ENCODE measurements at regions of chr18 and their contacts with region 1.

Region 1: DNA sequence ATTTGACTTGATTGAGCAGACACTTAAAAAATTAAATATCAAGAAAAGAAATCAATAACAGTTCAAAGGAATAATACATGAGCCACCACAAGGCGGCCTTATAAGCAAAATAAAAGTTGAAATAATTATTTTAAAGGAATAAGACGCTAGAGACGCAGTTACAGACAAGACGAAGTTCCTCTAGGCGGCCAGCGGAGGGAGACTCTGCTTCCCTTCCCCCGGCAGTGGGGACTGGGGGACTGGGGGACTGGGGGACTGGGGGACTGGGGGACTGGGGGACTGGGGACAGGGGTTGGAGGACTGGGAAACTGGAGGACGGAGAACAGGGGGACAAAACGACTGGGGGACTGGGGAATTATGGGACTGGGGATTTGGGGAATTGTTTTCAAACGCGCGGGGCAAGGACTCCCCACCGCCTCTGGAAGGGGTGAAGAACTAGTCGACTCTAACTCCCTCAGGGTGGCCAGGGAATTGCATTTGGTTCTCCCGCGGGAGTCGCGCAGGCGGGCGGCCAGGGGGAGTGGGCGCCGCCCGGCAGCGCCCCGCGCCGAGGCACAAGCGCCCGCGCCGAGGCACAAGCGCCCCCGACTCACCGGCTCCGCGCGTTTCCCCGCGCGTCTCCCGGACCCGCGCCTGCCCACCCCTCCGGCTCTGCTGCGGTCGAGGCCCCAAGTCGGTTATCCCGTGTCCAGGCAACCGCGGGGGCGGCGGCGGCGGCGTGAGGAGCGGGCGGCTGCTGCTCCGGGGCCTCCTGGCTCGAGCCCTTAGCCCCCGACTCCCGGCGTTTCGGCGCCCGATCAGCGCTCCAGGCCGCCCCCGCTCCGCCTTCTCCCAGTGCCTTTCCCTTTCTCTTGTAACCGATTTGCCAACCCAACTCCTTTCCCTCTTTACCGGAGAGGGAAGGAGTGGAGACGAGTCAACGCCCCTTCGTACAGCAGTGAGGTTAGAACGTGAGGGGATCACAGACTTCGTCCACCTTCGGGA is at the start of gene CCDC178:
- DNase-seq: peak; percentile 32
- H3K4me3 ChIP-seq: peak within 1 kb of the TSS; percentile 46
- H3K27ac ChIP-seq: no peak within 1 kb of the TSS
- H3K4me1 ChIP-seq: no peaks in the 10 kb centered on the region
- H3K27me3 ChIP-seq: peaks cover 13% of the 10 kb centered on the region
- CTCF ChIP-seq: peak; percentile 15
- total RNA-seq, gene CCDC178: not detected

Region 2: GRCh38 chr18:33161131-33161530 is 279.2 kb before region 1 on chr18:
- intact Hi-C with region 1: no loop called
- DNase-seq: no peak
- H3K4me3 ChIP-seq: no peak overlapping the region
- H3K27ac ChIP-seq: no peak overlapping the region
- H3K4me1 ChIP-seq: no peaks in the 10 kb centered on the region
- H3K27me3 ChIP-seq: no peaks in the 10 kb centered on the region
- CTCF ChIP-seq: no peak

Region 3: DNA sequence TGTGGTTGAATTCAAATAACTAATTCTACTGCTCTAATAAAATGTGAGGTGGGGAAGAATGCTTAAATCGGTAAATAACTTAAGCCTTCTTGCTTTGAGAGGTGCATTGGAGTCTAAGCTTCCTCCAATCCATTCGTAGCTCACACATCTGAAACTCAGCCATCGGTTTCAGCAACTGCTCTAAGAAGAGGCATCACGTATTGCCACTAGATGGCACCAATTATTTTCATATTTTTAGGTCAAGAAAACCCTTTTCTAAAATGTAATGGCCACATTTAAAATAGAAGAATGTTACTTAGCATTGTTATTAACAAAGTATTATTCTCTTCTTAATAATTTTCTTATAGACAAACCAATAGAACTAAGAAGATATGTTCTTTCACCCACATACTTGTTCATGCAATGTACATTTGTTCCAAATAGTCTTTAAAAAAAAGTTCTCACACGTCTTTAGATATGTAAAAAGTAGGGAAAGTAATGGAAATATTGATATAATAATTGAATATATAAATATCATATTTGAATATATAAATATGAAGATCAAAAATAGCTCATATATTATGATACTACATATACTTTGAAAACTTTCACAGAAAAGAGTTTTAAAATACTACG is 229.7 kb before region 1 on chr18:
- intact Hi-C with region 1: no loop called
- DNase-seq: no peak
- H3K4me3 ChIP-seq: no peak overlapping the region
- H3K27ac ChIP-seq: no peak overlapping the region
- H3K4me1 ChIP-seq: no peaks in the 10 kb centered on the region
- H3K27me3 ChIP-seq: no peaks in the 10 kb centered on the region
- CTCF ChIP-seq: peak; percentile 53

Region 4: GRCh38 chr18:33334781-33335180 is 105.6 kb before region 1 on chr18:
- intact Hi-C with region 1: no loop called
- DNase-seq: no peak
- H3K4me3 ChIP-seq: no peak overlapping the region
- H3K27ac ChIP-seq: no peak overlapping the region
- H3K4me1 ChIP-seq: no peaks in the 10 kb centered on the region
- H3K27me3 ChIP-seq: no peaks in the 10 kb centered on the region
- CTCF ChIP-seq: no peak

Region 5: GRCh38 chr18:33577685-33578517 is 137.5 kb after region 1 on chr18 and contains the start of gene ASXL3:
- intact Hi-C with region 1: loop called (anchors 10 kb)
- DNase-seq: peak; percentile 64
- H3K4me3 ChIP-seq: peak within 1 kb of the TSS; percentile 60
- H3K27ac ChIP-seq: peak within 1 kb of the TSS; percentile 15
- H3K4me1 ChIP-seq: no peaks in the 10 kb centered on the region
- H3K27me3 ChIP-seq: no peaks in the 10 kb centered on the region
- CTCF ChIP-seq: no peak
- total RNA-seq, gene ASXL3: 0.59 to 1.7 TPM

Region 6: GRCh38 chr18:33673689-33674088 is 233.3 kb after region 1 on chr18:
- intact Hi-C with region 1: no loop called
- DNase-seq: no peak
- H3K4me3 ChIP-seq: no peak overlapping the region
- H3K27ac ChIP-seq: no peak overlapping the region
- H3K4me1 ChIP-seq: no peaks in the 10 kb centered on the region
- H3K27me3 ChIP-seq: no peaks in the 10 kb centered on the region
- CTCF ChIP-seq: no peak

Measured in colonic mucosa (tissue), 4 donors.